Right ventricle myocardium inferior (tissue), 1 donor: ENCODE measurements at regions of chr9 and their contacts with region 1.

Region 1: DNA sequence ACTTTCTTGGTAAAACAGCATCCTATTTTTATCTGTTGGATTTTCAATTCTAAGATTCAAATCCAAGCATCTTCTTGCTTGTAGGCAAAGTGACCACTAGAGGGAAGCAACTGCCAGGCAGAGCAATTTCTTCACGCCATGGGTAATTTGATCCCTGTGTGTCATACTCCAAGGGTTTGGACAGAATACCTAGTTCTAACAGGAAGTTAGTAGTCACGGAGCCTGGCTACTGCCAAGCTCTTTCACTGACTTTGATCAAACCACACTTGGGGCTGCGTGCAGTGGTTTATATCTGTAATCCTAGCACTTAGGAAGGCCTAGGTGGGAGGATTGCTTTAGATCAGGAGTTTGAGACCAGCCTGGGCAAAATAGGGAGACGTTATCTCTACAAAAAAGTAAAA is 473.6 kb upstream of the TNC start:
- DNase-seq: no peak
- ATAC-seq: peak; percentile 78

Region 2: DNA sequence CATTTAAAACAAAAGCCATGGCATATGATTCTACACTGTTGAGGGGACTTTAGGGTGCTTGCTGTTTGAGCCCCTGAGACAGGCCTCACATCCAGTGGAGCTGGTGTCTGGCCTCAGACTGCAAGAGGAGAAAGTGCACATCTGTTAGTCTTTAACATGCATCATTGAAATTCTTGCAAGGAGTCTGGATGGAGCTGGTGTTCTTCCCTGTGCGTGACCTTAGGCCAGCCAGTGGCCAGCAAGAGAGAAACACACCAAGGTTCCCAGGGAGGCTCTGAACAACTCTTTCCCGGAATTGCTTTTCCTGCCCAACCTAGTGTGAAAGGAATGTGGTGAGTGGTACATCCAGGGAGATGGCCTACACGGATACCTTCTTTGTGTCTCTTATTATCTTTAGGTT is 190.8 kb before region 1 on chr9:
- intact Hi-C with region 1: no loop called
- DNase-seq: no peak
- ATAC-seq: no peak

Region 3: DNA sequence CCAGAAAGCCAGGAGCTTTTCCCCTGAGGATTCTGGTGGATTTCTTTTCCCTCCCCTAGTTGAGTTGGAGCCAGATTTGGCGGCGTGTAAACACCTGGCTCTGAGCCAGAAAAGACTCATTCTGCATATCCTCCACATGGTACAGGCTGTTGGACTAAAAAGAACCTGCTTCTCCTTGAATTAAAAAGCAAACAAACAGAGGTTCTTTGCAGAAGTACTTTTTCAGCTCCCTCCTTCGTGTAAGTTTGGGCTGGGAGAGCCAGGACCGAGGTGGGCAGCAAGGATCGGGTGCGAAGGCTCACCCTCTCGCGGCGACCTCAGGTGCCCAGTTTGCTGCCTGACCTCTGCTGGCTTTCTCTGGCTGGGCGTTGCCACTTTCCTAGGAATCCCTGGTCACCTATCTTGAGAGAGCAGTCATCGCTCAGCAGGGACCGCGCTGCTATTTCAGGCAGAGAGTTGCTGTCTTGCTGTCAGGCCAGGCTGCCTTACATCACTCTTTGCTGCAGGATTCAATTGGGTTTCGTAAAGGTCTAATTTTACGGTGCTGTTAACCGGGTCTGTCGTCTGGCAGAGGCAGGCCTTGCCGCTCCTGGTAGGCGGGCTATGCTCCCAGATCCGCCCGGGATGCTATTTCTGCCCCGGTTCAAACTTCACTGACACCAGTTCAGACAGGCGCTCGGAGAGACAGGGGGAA is 565.2 kb after region 1 on chr9:
- intact Hi-C with region 1: loop called (anchors 5 kb)
- DNase-seq: peak; percentile 83
- ATAC-seq: peak; percentile 92

Region 4: DNA sequence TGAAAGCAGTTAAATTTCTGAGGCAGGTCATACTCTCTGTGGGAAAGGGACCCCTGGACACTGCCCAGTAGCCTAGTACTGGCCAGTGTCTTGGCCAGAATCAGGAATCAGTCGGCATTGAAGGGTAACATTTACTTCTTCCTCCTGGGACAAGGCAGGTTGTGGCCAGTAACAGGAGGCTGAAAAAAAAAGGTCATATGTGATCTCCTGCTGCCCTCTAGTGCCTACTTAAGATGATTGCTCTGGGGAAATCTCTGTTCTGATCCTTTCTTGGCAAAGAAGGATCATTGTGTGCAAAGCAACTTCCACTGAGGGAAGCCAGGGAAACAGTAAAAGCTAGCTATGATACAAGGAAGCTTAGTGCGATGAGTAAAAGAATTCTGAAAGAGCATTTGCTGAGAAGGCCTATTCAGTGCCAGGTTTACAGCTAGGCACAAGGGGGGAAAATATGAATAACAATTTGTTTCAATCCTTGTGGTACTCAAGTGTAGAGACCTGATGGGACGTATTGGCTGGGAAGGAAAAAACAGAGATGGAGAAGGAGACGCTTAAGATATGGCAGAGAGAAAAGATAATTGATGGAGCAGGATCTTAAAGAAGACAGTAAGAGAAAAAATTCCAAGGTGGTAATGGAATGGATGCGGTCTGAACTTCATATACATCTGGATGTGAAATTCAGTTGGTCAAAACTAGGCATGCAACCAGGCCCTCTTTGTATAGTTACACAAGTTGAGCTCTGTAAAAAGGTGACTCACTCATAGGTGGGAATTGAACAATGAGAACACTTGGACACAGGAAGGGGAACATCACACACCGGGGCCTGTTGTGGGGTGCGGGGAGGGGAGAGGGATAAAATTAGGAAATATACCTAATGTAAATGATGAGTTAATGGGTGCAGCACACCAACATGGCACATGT is 1069.7 kb after region 1 on chr9:
- intact Hi-C with region 1: loop called (anchors 5 kb)
- DNase-seq: no peak
- ATAC-seq: peak; percentile 83

Region 5: GRCh38 chr9:116860509-116861120 is 1269.0 kb after region 1 on chr9:
- intact Hi-C with region 1: loop called (anchors 5 kb)
- DNase-seq: peak; percentile 76
- ATAC-seq: peak; percentile 81